AG04450 (cell line): ENCODE measurements at regions of chr3 and their contacts with region 1.

Region 1: GRCh38 chr3:62611562-62612240 is 238.4 kb upstream of the FEZF2 start:
- DNase-seq: no peak
- H3K4me3 ChIP-seq: no peak overlapping the region
- H3K27ac ChIP-seq: no peak overlapping the region
- H3K27me3 ChIP-seq: no peaks in the 10 kb centered on the region
- CTCF ChIP-seq: no peak

Region 2: GRCh38 chr3:62665598-62666437 is 54.1 kb after region 1 on chr3:
- CTCF ChIA-PET with region 1: no interaction called
- POLR2A ChIA-PET with region 1: interaction called, 16 read pairs
- DNase-seq: no peak
- H3K4me3 ChIP-seq: no peak overlapping the region
- H3K27ac ChIP-seq: no peak overlapping the region
- H3K27me3 ChIP-seq: peaks cover 8% of the 10 kb centered on the region
- CTCF ChIP-seq: peak; percentile 49